Activated B cell treated with CpG ODN at 0.5 μM for 24 hours (primary cell): ENCODE measurements at regions of chr14 and their contacts with region 1.

Region 1: GRCh38 chr14:105861985-105862465 is 335.6 kb downstream of the TMEM121 start:
- DNase-seq: peak; percentile 57
- ATAC-seq: peak; percentile 30
- H3K4me3 Mint-ChIP-seq: peak overlapping the region; percentile 98
- H3K27ac Mint-ChIP-seq: peak overlapping the region; percentile 99
- H3K4me1 Mint-ChIP-seq: peaks cover 1% of the 10 kb centered on the region
- H3K27me3 Mint-ChIP-seq: no peaks in the 10 kb centered on the region
- CTCF ChIP-seq: no peak

Region 2: DNA sequence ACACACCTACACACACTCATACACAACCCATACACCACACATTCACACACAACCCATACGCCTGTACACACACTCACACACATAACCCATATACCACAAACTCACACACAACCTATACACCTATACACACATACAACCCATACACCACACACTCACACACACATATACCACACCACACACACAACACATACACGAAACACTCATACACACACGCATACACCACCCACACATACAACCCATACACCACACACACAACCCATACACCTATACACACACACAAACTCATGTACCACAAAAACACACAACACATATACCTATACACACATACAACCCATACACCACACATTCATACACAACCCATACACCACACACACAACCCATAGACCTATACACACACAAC is 171.3 kb before region 1 on chr14:
- CTCF ChIA-PET with region 1: no interaction called
- POLR2A ChIA-PET with region 1: interaction called, 10 read pairs
- intact Hi-C with region 1: no loop called
- DNase-seq: no peak
- ATAC-seq: no peak
- H3K4me3 Mint-ChIP-seq: no peak overlapping the region
- H3K27ac Mint-ChIP-seq: peak overlapping the region; percentile 90
- H3K4me1 Mint-ChIP-seq: peaks cover 69% of the 10 kb centered on the region
- H3K27me3 Mint-ChIP-seq: no peaks in the 10 kb centered on the region
- CTCF ChIP-seq: no peak

Region 3: GRCh38 chr14:105773995-105774394 is 88.0 kb before region 1 on chr14:
- CTCF ChIA-PET with region 1: no interaction called
- POLR2A ChIA-PET with region 1: interaction called, 89 read pairs
- intact Hi-C with region 1: no loop called
- DNase-seq: no peak
- ATAC-seq: no peak
- H3K4me3 Mint-ChIP-seq: peak overlapping the region; percentile 94
- H3K27ac Mint-ChIP-seq: peak overlapping the region; percentile 89
- H3K4me1 Mint-ChIP-seq: peaks cover 64% of the 10 kb centered on the region
- H3K27me3 Mint-ChIP-seq: no peaks in the 10 kb centered on the region
- CTCF ChIP-seq: no peak

Region 4: GRCh38 chr14:105908481-105908911 is 46.5 kb after region 1 on chr14:
- CTCF ChIA-PET with region 1: no interaction called
- POLR2A ChIA-PET with region 1: interaction called, 20 read pairs
- intact Hi-C with region 1: no loop called
- DNase-seq: no peak
- ATAC-seq: peak; percentile 68
- H3K4me3 Mint-ChIP-seq: peak overlapping the region; percentile 69
- H3K27ac Mint-ChIP-seq: peak overlapping the region; percentile 63
- H3K4me1 Mint-ChIP-seq: peaks cover 30% of the 10 kb centered on the region
- H3K27me3 Mint-ChIP-seq: no peaks in the 10 kb centered on the region
- CTCF ChIP-seq: no peak

Region 5: DNA sequence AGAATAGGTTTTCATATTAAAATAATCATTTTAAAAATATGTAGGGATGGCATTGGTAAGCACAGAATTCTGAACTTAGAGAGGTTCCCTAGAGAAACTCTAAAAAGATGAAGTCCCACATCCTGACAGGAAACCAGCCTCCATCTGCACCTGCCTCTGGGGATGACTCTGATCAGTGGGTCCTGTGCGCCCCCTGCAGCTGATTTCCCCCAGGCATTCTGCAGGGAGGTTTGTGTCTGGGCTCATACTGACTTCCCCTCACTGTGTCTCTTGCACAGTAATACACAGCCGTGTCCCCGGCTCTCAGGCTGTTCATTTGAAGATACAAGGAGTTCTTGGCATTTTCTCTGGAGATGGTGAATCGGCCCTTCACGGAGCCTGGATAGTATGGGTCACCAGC is 267.2 kb after region 1 on chr14:
- CTCF ChIA-PET with region 1: no interaction called
- POLR2A ChIA-PET with region 1: interaction called, 4 read pairs
- intact Hi-C with region 1: loop called (anchors 10 kb)
- DNase-seq: no peak
- ATAC-seq: no peak
- H3K4me3 Mint-ChIP-seq: no peak overlapping the region
- H3K27ac Mint-ChIP-seq: no peak overlapping the region
- H3K4me1 Mint-ChIP-seq: peaks cover 11% of the 10 kb centered on the region
- H3K27me3 Mint-ChIP-seq: peaks cover 7% of the 10 kb centered on the region
- CTCF ChIP-seq: no peak

Region 6: GRCh38 chr14:106422066-106422465 is 560.0 kb after region 1 on chr14:
- CTCF ChIA-PET with region 1: no interaction called
- POLR2A ChIA-PET with region 1: interaction called, 16 read pairs
- intact Hi-C with region 1: no loop called
- DNase-seq: no peak
- ATAC-seq: no peak
- H3K4me3 Mint-ChIP-seq: peak overlapping the region; percentile 48
- H3K27ac Mint-ChIP-seq: no peak overlapping the region
- H3K4me1 Mint-ChIP-seq: no peaks in the 10 kb centered on the region
- H3K27me3 Mint-ChIP-seq: peaks cover 26% of the 10 kb centered on the region
- CTCF ChIP-seq: no peak